Sigmoid colon (tissue), 7 donors: ENCODE measurements at regions of chr12 and their contacts with region 1.

Region 1: GRCh38 chr12:6451348-6452244 is at the start of gene TAPBPL:
- DNase-seq: peak; percentile 93
- H3K4me3 ChIP-seq: peak within 1 kb of the TSS; percentile 53 to 80 (median 60)
- H3K27ac ChIP-seq: peak within 1 kb of the TSS; percentile 90 to 98 (median 94)
- H3K4me1 ChIP-seq: peaks cover 0 to 43% (median 37%) of the 10 kb centered on the region in 4 donors
- H3K27me3 ChIP-seq: no peaks in the 10 kb centered on the region
- CTCF ChIP-seq: no peak
- EP300 ChIP-seq: peak in 1 of 4 donors; percentile 9
- POLR2A ChIP-seq: peak; percentile 83 to 84
- total RNA-seq, gene TAPBPL: 20.2 to 27.5 (median 26.9) TPM

Region 2: GRCh38 chr12:6323340-6323994 is 128.1 kb before region 1 on chr12:
- intact Hi-C with region 1: loop called (anchors 5 kb)
- DNase-seq: peak; percentile 89
- H3K4me3 ChIP-seq: peak overlapping the region in 2 of 4 donors; percentile 10 to 13
- H3K27ac ChIP-seq: peak overlapping the region; percentile 77 to 98 (median 92)
- H3K4me1 ChIP-seq: peaks cover 0 to 65% (median 56%) of the 10 kb centered on the region in 4 donors
- H3K27me3 ChIP-seq: no peaks in the 10 kb centered on the region
- CTCF ChIP-seq: peak; percentile 41 to 73 (median 48)
- EP300 ChIP-seq: no peak
- POLR2A ChIP-seq: no peak

Region 3: GRCh38 chr12:6392504-6393077 is 59.0 kb before region 1 on chr12:
- intact Hi-C with region 1: loop called (anchors 5 kb)
- DNase-seq: peak; percentile 91
- H3K4me3 ChIP-seq: no peak overlapping the region
- H3K27ac ChIP-seq: peak overlapping the region; percentile 81 to 98 (median 90)
- H3K4me1 ChIP-seq: peaks cover 0 to 51% (median 46%) of the 10 kb centered on the region in 4 donors
- H3K27me3 ChIP-seq: no peaks in the 10 kb centered on the region
- CTCF ChIP-seq: no peak
- EP300 ChIP-seq: peak in 1 of 4 donors; percentile 29
- POLR2A ChIP-seq: peak in 1 of 2 donors; percentile 59

Region 4: GRCh38 chr12:6430124-6430989 is 21.2 kb before region 1 on chr12:
- intact Hi-C with region 1: loop called (anchors 2 kb)
- DNase-seq: peak; percentile 96
- H3K4me3 ChIP-seq: peak overlapping the region in 3 of 4 donors; percentile 31 to 43 (median 41)
- H3K27ac ChIP-seq: peak overlapping the region; percentile 83 to 90 (median 86)
- H3K4me1 ChIP-seq: peaks cover 0 to 19% (median 14%) of the 10 kb centered on the region in 4 donors
- H3K27me3 ChIP-seq: no peaks in the 10 kb centered on the region
- CTCF ChIP-seq: no peak
- EP300 ChIP-seq: peak in 1 of 4 donors; percentile 58
- POLR2A ChIP-seq: no peak

Region 5: DNA sequence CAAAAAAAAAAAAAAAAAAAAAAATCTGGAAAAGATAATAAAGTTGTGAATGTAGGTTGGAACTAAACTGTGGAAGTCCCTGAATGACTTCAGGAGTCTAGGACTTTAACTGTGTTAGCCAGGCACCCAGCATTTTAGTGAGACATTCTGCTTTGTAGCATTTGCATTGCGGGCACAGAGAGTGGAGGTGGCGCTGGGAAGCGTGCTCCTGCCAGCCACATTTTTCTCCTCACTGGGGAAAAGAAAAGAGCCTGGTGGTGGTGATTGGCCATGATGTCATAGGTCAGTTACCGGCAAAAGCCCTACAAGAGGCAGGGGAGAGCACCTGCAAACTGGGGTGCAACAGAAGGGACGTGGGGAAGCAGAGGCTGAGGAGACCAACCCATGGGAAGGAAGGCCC is 73.1 kb after region 1 on chr12:
- intact Hi-C with region 1: no loop called
- DNase-seq: no peak
- H3K4me3 ChIP-seq: no peak overlapping the region
- H3K27ac ChIP-seq: no peak overlapping the region
- H3K4me1 ChIP-seq: no peaks in the 10 kb centered on the region
- H3K27me3 ChIP-seq: no peaks in the 10 kb centered on the region
- CTCF ChIP-seq: no peak
- EP300 ChIP-seq: no peak
- POLR2A ChIP-seq: no peak

Region 6: DNA sequence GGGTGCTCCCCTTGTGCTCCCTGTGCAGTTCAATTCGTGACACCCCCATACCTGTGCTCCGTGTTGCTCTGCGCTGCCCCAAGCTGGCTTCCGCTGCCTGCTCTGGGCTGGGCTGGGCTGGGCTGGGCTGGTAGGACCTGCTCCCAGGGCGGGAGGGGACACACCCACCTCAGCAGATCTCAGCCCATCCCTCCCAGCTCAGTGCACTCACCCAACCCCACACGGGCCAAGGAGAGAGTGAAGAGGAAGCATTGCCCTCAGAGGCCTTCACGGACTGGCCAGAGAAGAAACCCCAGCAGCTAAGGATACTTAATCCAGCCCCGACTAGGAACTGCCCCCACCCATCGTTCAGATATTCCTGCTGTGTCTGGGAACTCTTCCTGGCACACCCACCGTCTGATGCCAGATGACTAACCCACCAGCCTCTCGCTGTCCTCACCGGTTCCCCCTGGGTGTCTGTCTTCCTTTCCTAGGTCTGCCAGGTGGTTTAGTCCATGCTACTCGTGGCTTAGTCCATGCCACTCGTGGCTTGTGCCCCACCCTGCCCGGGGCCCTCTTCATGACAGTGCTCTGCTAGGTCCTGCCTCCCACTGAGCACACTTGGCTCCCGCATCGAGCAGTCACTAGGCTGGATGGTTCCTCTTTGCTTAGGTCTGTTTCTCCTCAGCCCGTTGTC is 184.4 kb after region 1 on chr12 and contains the start of gene LPAR5:
- intact Hi-C with region 1: no loop called
- DNase-seq: no peak
- H3K4me3 ChIP-seq: no peak within 1 kb of the TSS
- H3K27ac ChIP-seq: peak within 1 kb of the TSS in 1 of 4 donors; percentile 19
- H3K4me1 ChIP-seq: peaks cover 0 to 8% (median 2%) of the 10 kb centered on the region in 4 donors
- H3K27me3 ChIP-seq: no peaks in the 10 kb centered on the region
- CTCF ChIP-seq: no peak
- EP300 ChIP-seq: no peak
- POLR2A ChIP-seq: peak in 1 of 2 donors; percentile 64
- total RNA-seq, gene LPAR5: 0.27 to 1.5 (median 0.67) TPM